Ascending aorta (tissue), 2 donors: ENCODE measurements at regions of chr1 and their contacts with region 1.

Region 1: DNA sequence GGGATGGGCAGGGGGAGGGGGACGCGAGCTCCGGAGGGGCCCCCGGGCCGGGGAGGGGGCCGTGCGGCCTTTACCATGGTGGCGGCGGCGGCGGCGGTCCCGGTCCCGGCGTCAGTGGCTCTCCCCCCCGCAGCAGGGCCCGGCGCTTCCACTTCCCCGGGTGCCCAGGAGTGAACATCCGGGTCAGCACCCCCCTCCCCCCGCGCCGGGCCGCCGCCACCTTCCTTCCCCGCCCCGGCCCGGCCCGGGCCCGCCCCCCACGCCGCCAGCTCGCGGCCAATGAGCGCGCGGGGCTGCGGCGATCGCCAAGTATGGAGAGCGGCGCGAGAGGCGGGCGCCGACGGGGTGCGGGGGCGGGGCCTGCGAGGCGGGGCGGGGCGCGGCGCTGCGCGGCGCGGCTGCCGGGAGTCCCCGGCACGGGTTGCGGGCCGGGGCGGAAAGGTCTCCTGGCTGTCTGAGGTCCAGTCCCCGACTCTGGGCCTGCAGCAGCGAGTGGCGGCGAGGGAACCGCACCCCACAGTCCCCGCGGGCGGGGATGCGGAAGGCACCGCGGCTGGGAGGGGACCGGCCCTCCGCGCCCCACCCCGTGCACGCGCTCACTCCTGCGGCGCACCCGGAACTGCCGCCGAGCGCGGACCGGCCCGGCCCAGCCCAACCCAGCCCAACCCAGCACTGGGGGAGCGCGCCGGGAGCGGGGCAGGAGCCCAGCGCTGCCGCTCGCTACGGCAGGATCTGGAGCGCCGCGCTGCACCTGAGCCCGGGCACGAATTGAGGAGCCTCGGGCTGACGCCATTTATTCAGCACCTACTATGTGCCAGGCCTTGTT is at the start of gene CAPZB:
- DNase-seq: peak; percentile 80 to 96
- H3K4me3 ChIP-seq: peak within 1 kb of the TSS; percentile 96 to 99
- H3K27ac ChIP-seq: peak within 1 kb of the TSS; percentile 97 to 99
- H3K4me1 ChIP-seq: peaks cover 20 to 47% of the 10 kb centered on the region in 2 donors
- H3K27me3 ChIP-seq: no peaks in the 10 kb centered on the region
- CTCF ChIP-seq: no peak
- total RNA-seq, gene CAPZB: 102 TPM

Region 2: GRCh38 chr1:19311959-19312781 is 173.4 kb before region 1 on chr1 and contains the starts of genes AKR7A2 and SLC66A1:
- intact Hi-C with region 1: loop called (anchors 1 kb)
- DNase-seq: peak; percentile 78 to 96
- H3K4me3 ChIP-seq: peak within 1 kb of the TSS; percentile 71 to 96
- H3K27ac ChIP-seq: peak within 1 kb of the TSS; percentile 83 to 93
- H3K4me1 ChIP-seq: peaks cover 0 to 13% of the 10 kb centered on the region in 2 donors
- H3K27me3 ChIP-seq: no peaks in the 10 kb centered on the region
- CTCF ChIP-seq: no peak
- total RNA-seq, gene AKR7A2: 53.7 TPM
- total RNA-seq, gene SLC66A1: 11.1 TPM

Region 3: DNA sequence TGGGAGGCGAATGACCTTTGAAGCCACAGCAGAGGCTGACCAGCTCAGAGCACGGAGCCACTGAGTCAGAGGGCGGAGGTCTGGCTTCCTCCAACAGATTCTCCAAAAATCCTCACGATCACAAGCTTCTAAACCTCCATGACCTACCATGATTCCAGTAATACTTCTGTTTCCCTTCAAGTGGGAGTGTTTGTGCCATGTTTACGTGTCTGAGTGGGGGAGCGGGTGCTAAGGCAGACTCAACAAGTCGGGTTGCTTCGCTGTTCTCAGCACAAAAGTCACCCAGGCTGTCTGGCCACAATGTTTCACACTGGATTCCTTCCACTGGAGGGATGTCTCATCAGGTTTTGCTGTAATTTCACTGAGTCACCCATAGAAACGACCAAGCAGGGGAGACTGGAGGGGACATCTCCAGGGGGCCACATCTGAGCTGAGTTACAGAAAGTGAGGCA is 87.2 kb before region 1 on chr1:
- intact Hi-C with region 1: loop called (anchors 2 kb)
- DNase-seq: peak in 1 of 2 donors; percentile 83
- H3K4me3 ChIP-seq: no peak overlapping the region
- H3K27ac ChIP-seq: peak overlapping the region; percentile 82 to 86
- H3K4me1 ChIP-seq: peaks cover 31 to 69% of the 10 kb centered on the region in 2 donors
- H3K27me3 ChIP-seq: no peaks in the 10 kb centered on the region
- CTCF ChIP-seq: peak; percentile 49 to 71 (median 49)

Region 4: GRCh38 chr1:19596714-19597495 is 111.3 kb after region 1 on chr1:
- intact Hi-C with region 1: loop called (anchors 1 kb)
- DNase-seq: peak; percentile 89 to 99
- H3K4me3 ChIP-seq: peak overlapping the region; percentile 69 to 73
- H3K27ac ChIP-seq: peak overlapping the region; percentile 80 to 91
- H3K4me1 ChIP-seq: peaks cover 3 to 31% of the 10 kb centered on the region in 2 donors
- H3K27me3 ChIP-seq: no peaks in the 10 kb centered on the region
- CTCF ChIP-seq: no peak